ENCODE measurements at regions of chr10 and their contacts with region 1.

Region 1: DNA sequence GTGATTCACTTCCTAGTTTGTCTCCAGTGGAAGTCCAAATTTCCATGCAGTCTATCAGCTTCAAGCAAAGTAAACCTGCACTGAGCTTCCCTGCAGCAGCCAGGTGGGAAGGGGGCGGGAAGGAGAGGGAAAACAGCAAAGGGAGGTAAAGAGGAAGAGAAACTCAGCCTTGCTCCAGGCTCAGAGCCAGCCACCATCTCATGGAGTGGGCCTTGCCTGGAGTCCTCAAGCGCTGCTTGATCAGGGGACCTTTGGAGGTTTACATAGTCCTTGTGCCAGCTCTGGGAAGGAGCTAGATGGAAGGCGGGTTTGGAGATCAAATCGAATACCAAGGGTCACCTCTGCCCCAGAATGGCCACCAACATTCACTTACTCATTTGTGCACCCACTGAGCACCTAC is 7.4 kb downstream of the CRTAC1 start:
- DNase-seq: no peak
- H3K4me3 ChIP-seq: no peak overlapping the region
- H3K27ac ChIP-seq: no peak overlapping the region
- H3K4me1 ChIP-seq: no peaks in the 10 kb centered on the region
- H3K27me3 ChIP-seq: peaks cover 0 to 60% of the 10 kb centered on the region in 2 donors
- CTCF ChIP-seq: no peak

Region 2: GRCh38 chr10:97222326-97222961 is 800.6 kb before region 1 on chr10:
- intact Hi-C with region 1: loop called (anchors 5 kb)
- DNase-seq: no peak
- H3K4me3 ChIP-seq: no peak overlapping the region
- H3K27ac ChIP-seq: no peak overlapping the region
- H3K4me1 ChIP-seq: no peaks in the 10 kb centered on the region
- H3K27me3 ChIP-seq: no peaks in the 10 kb centered on the region
- CTCF ChIP-seq: no peak

Region 3: GRCh38 chr10:98246911-98247805 is 224.1 kb after region 1 on chr10:
- intact Hi-C with region 1: no loop called
- DNase-seq: no peak
- H3K4me3 ChIP-seq: no peak overlapping the region
- H3K27ac ChIP-seq: no peak overlapping the region
- H3K4me1 ChIP-seq: peaks cover 0 to 14% (median 0%) of the 10 kb centered on the region in 4 donors
- H3K27me3 ChIP-seq: no peaks in the 10 kb centered on the region
- CTCF ChIP-seq: no peak

Measured in tibial artery (tissue), 4 donors.